ENCODE measurements at regions of chr1 and their contacts with region 1.

Region 1: GRCh38 chr1:156383023-156383422 is 14.0 kb downstream of the RHBG start:
- DNase-seq: peak; percentile 31 to 72 (median 53)
- ATAC-seq: peak; percentile 61 to 93 (median 86)
- H3K4me3 ChIP-seq: no peak overlapping the region
- H3K27ac ChIP-seq: no peak overlapping the region
- H3K4me1 ChIP-seq: peaks cover 0 to 4% (median under 1%) of the 10 kb centered on the region in 12 donors
- H3K27me3 ChIP-seq: peaks cover 0 to 22% (median 6%) of the 10 kb centered on the region in 9 donors
- CTCF ChIP-seq: peak; percentile 61 to 80 (median 74)
- POLR2A ChIP-seq: no peak

Region 2: GRCh38 chr1:156226116-156226538 is 156.9 kb before region 1 on chr1:
- intact Hi-C with region 1: no loop called
- DNase-seq: peak in 1 of 5 donors; percentile 1
- ATAC-seq: no peak
- H3K4me3 ChIP-seq: no peak overlapping the region
- H3K27ac ChIP-seq: no peak overlapping the region
- H3K4me1 ChIP-seq: peaks cover 0 to 16% (median 0%) of the 10 kb centered on the region in 12 donors
- H3K27me3 ChIP-seq: no peaks in the 10 kb centered on the region
- CTCF ChIP-seq: no peak
- POLR2A ChIP-seq: no peak

Region 3: GRCh38 chr1:156445789-156446263 is 62.8 kb after region 1 on chr1:
- intact Hi-C with region 1: loop called (anchors 1 to 2 kb)
- DNase-seq: peak; percentile 69 to 89 (median 78)
- ATAC-seq: peak in 3 of 4 donors; percentile 91 to 94 (median 92)
- H3K4me3 ChIP-seq: no peak overlapping the region
- H3K27ac ChIP-seq: no peak overlapping the region
- H3K4me1 ChIP-seq: peaks cover 0 to 7% (median 0%) of the 10 kb centered on the region in 12 donors
- H3K27me3 ChIP-seq: peaks cover 7 to 61% (median 38%) of the 10 kb centered on the region in 9 donors
- CTCF ChIP-seq: peak; percentile 91 to 98 (median 94)
- POLR2A ChIP-seq: no peak

Region 4: GRCh38 chr1:156540791-156541383 is 157.9 kb after region 1 on chr1:
- intact Hi-C with region 1: loop called in 1 of 10 experiments (anchors 10 kb)
- DNase-seq: no peak
- ATAC-seq: peak in 3 of 4 donors; percentile 48 to 59 (median 54)
- H3K4me3 ChIP-seq: no peak overlapping the region
- H3K27ac ChIP-seq: no peak overlapping the region
- H3K4me1 ChIP-seq: peaks cover 0 to 7% (median 0%) of the 10 kb centered on the region in 12 donors
- H3K27me3 ChIP-seq: no peaks in the 10 kb centered on the region
- CTCF ChIP-seq: no peak
- POLR2A ChIP-seq: no peak

Region 5: DNA sequence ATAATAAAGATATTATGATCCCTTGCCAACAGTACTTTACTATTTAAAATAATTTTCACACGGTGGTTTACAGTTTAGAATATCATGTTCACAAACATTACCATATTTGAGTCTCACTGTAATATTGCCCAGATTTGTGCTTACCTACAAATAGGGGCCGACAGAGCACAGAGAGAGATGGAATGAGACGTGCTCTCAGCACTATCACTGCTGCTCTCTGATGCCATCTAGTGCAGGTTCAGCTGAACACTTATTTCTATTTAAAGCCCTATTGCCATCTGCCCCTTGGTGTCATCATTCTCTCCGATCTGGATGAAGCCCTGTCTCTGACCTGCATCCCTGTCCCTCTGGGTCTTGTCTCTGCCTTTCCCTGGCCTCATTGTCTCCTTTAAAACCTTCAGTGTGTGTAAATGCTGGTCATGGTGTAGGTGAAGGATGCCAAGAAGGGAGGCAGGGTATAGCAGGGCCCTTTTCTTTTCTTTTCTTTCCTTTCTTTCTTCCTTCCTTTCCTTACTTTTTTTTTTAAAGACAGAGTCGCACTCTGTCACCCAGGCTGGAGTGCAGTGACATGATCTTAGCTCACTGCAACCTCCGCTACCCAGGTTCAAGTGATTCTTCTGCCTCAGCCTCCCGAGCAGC is 225.1 kb after region 1 on chr1:
- intact Hi-C with region 1: loop called (anchors 2 to 10 kb)
- DNase-seq: peak in 4 of 5 donors; percentile 41 to 63 (median 60)
- ATAC-seq: peak; percentile 89 to 94 (median 91)
- H3K4me3 ChIP-seq: no peak overlapping the region
- H3K27ac ChIP-seq: no peak overlapping the region
- H3K4me1 ChIP-seq: peaks cover 0 to 8% (median 4%) of the 10 kb centered on the region in 12 donors
- H3K27me3 ChIP-seq: no peaks in the 10 kb centered on the region
- CTCF ChIP-seq: peak; percentile 55 to 84 (median 76)
- POLR2A ChIP-seq: no peak

Region 6: GRCh38 chr1:156618853-156619581 is 236.0 kb after region 1 on chr1 and contains the start of gene HAPLN2:
- intact Hi-C with region 1: loop called in 3 of 10 experiments (anchors 5 to 10 kb)
- DNase-seq: no peak
- ATAC-seq: no peak
- H3K4me3 ChIP-seq: no peak within 1 kb of the TSS
- H3K27ac ChIP-seq: no peak within 1 kb of the TSS
- H3K4me1 ChIP-seq: peaks cover 0 to 38% (median 13%) of the 10 kb centered on the region in 12 donors
- H3K27me3 ChIP-seq: peaks cover 0 to 24% (median 9%) of the 10 kb centered on the region in 9 donors
- CTCF ChIP-seq: peak in 7 of 12 donors; percentile 14 to 40 (median 28)
- POLR2A ChIP-seq: no peak
- total RNA-seq, gene HAPLN2: 0.52 to 2.4 (median 0.95) TPM

Region 7: DNA sequence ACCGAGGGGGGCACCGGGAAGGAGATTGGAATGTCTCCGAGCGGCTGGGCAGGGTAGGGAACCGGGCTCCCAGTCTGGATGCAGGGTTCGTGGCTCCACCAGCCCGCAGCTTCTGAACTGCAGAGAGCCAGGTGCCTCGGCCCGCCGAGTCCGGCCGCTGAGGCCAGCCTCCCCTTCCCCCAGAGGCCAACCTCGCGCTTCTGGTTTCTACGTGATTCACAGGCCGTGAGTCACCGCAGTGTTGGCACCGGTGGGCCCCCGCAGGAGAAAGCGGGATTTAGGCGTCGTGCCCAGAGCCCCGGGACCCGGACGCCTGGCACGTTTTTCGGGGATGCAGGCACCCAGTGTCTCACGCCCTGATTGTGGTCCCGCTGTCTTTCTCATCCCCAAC is 321.9 kb after region 1 on chr1:
- intact Hi-C with region 1: no loop called
- DNase-seq: peak in 2 of 5 donors; percentile 60 to 65
- ATAC-seq: peak in 1 of 4 donors; percentile 26
- H3K4me3 ChIP-seq: peak overlapping the region in 11 of 12 donors; percentile 12 to 68 (median 47)
- H3K27ac ChIP-seq: peak overlapping the region in 2 of 12 donors; percentile 81 to 91
- H3K4me1 ChIP-seq: peaks cover 0 to 50% (median 33%) of the 10 kb centered on the region in 12 donors
- H3K27me3 ChIP-seq: peaks cover 0 to 48% (median 33%) of the 10 kb centered on the region in 9 donors
- CTCF ChIP-seq: no peak
- POLR2A ChIP-seq: no peak

Region 8: GRCh38 chr1:157551694-157552637 is 1168.9 kb after region 1 on chr1 and contains the start of gene FCRL5:
- intact Hi-C with region 1: no loop called
- DNase-seq: no peak
- ATAC-seq: no peak
- H3K4me3 ChIP-seq: no peak within 1 kb of the TSS
- H3K27ac ChIP-seq: no peak within 1 kb of the TSS
- H3K4me1 ChIP-seq: no peaks in the 10 kb centered on the region
- H3K27me3 ChIP-seq: peaks cover 0 to 9% (median 0%) of the 10 kb centered on the region in 9 donors
- CTCF ChIP-seq: no peak
- POLR2A ChIP-seq: no peak
- total RNA-seq, gene FCRL5: 0.07 to 0.32 (median 0.09) TPM in 3 of 9 donors, not detected in the others